Activated CD8-positive, alpha-beta memory T cell treated with anti-CD3 and anti-CD28 coated beads, Interleukin-2, amount 10 ng/mL, durations not matched to agents 7 days and 5 days (primary cell): ENCODE measurements at regions of chr4 and their contacts with region 1.

Region 1: GRCh38 chr4:86497980-86498862 is 95.9 kb upstream of the PTPN13 start:
- DNase-seq: no peak
- ATAC-seq: peak; percentile 71
- H3K4me3 Mint-ChIP-seq: no peak overlapping the region
- H3K27ac Mint-ChIP-seq: no peak overlapping the region
- H3K4me1 Mint-ChIP-seq: peaks cover 12% of the 10 kb centered on the region
- H3K27me3 Mint-ChIP-seq: peaks cover 24% of the 10 kb centered on the region

Region 2: GRCh38 chr4:86508436-86508835 is 10.2 kb after region 1 on chr4:
- CTCF ChIA-PET with region 1: interaction called, 12 read pairs
- DNase-seq: no peak
- ATAC-seq: no peak
- H3K4me3 Mint-ChIP-seq: no peak overlapping the region
- H3K27ac Mint-ChIP-seq: no peak overlapping the region
- H3K4me1 Mint-ChIP-seq: no peaks in the 10 kb centered on the region
- H3K27me3 Mint-ChIP-seq: peaks cover 18% of the 10 kb centered on the region

Region 3: DNA sequence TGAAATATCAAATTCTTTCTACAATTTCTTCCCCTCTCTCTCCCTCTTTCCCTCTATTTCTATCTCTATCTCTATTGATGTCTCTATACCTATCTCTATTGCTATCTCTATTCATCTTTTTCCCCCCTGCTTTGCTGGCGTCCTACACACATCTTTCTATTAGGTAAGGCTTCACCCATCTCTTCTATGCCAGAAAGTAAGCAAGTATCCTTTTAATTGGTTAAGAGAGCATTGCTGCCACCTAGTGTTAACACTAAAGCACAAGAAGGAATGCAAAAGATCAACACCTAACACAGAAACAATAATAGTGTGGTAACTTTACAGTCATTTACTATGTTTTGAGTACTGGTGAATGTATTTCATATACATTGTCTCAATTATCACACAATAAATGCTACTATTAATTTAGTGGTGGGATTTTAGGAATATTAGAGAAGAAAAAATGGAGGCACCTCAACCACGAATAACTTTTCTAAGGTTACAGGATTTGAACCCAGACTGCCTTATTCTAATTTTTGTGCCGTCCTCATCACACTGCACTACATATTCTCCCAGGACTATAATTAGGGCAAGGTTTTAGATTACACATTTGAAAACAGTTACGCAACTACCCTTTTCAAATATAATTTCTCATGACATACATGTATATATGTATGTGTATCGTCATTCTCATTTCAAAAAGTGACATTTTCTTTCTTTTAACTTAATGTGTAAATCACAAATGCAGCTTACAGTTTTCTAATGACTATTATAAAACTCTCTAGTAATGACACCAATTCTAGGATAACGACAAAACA is 397.7 kb after region 1 on chr4:
- CTCF ChIA-PET with region 1: interaction called, 12 read pairs
- DNase-seq: no peak
- ATAC-seq: peak; percentile 51
- H3K4me3 Mint-ChIP-seq: no peak overlapping the region
- H3K27ac Mint-ChIP-seq: no peak overlapping the region
- H3K4me1 Mint-ChIP-seq: peaks cover 9% of the 10 kb centered on the region
- H3K27me3 Mint-ChIP-seq: peaks cover 17% of the 10 kb centered on the region

Region 4: GRCh38 chr4:87204559-87204958 is 706.3 kb after region 1 on chr4:
- CTCF ChIA-PET with region 1: no interaction called
- DNase-seq: no peak
- ATAC-seq: no peak
- H3K4me3 Mint-ChIP-seq: no peak overlapping the region
- H3K27ac Mint-ChIP-seq: no peak overlapping the region
- H3K4me1 Mint-ChIP-seq: peaks cover under 1% of the 10 kb centered on the region
- H3K27me3 Mint-ChIP-seq: no peaks in the 10 kb centered on the region